Mammary epithelial cell (primary cell): ENCODE measurements at regions of chr14 and their contacts with region 1.

Region 1: GRCh38 chr14:71289531-71289930 is 382.3 kb downstream of the PCNX1 start:
- DNase-seq: no peak
- H3K4me3 ChIP-seq: no peak overlapping the region
- H3K27ac ChIP-seq: no peak overlapping the region
- H3K4me1 ChIP-seq: peaks cover 3% of the 10 kb centered on the region
- H3K27me3 ChIP-seq: no peaks in the 10 kb centered on the region
- CTCF ChIP-seq: no peak

Region 2: GRCh38 chr14:71242237-71242748 is 47.2 kb before region 1 on chr14:
- CTCF ChIA-PET with region 1: no interaction called
- dilution Hi-C with region 1: loop called (anchors 5 kb)
- in situ Hi-C with region 1: no loop called
- intact Hi-C with region 1: no loop called
- DNase-seq: no peak
- H3K4me3 ChIP-seq: no peak overlapping the region
- H3K27ac ChIP-seq: no peak overlapping the region
- H3K4me1 ChIP-seq: peaks cover 7% of the 10 kb centered on the region
- H3K27me3 ChIP-seq: no peaks in the 10 kb centered on the region
- CTCF ChIP-seq: no peak

Region 3: DNA sequence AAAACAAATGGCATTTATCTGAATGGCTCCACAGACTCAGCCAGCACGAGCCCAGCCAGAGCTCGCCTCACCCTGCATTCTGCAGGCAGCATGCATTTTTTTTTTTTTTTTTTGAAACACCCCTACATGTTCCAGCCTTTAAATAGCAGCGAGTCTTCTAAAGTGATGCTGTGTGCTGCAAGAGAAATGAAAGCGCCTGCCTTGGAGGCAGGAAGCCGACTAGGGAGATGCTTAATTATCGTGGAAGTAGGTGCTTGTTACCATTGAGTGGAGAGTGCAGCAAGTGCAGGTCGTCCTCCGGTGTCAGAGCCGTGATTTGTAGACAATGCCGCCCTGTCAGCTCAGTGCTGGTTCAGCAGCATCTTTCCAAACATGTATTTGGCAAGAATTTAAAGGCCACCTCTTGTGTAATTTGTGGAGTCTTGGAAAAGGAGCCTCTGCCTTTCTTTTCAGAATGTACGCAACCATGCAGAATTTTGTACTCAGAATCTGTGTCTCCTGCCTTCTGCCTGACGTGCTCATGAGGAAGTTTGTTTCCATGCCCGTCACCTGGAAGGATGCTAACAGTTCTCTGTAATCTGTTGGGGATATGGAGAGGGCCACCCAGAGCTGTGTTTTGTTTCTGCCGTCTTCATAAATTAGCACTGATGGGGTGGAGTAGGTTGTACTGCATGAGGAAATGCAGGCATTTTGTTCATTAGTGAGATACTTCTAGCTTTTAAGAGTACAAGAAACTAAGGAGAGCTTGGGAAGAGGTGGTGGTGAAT is 296.8 kb after region 1 on chr14:
- CTCF ChIA-PET with region 1: no interaction called
- dilution Hi-C with region 1: no loop called
- in situ Hi-C with region 1: no loop called
- intact Hi-C with region 1: no loop called
- DNase-seq: peak; percentile 16
- H3K4me3 ChIP-seq: no peak overlapping the region
- H3K27ac ChIP-seq: no peak overlapping the region
- H3K4me1 ChIP-seq: no peaks in the 10 kb centered on the region
- H3K27me3 ChIP-seq: no peaks in the 10 kb centered on the region
- CTCF ChIP-seq: no peak